Caco-2 (cell line): ENCODE measurements at regions of chr5 and their contacts with region 1.

Region 1: GRCh38 chr5:131263648-131264450 is at the start of gene CDC42SE2:
- DNase-seq: peak; percentile 78 to 90
- H3K4me3 ChIP-seq: peak within 1 kb of the TSS; percentile 100
- H3K4me3 Mint-ChIP-seq: peak within 1 kb of the TSS; percentile 84
- H3K27ac Mint-ChIP-seq: peak within 1 kb of the TSS; percentile 79
- H3K4me1 ChIP-seq: peaks cover 10% of the 10 kb centered on the region; the same call in 1 of the 2 replicates
- H3K4me1 Mint-ChIP-seq: peaks cover 9% of the 10 kb centered on the region
- H3K27me3 ChIP-seq: no peaks in the 10 kb centered on the region
- H3K27me3 Mint-ChIP-seq: no peaks in the 10 kb centered on the region
- CTCF ChIP-seq: no peak
- total RNA-seq, gene CDC42SE2: 39.4 and 41.1 TPM in 2 replicates

Region 2: GRCh38 chr5:131165119-131165727 is 98.6 kb before region 1 on chr5 and contains the start of gene HINT1:
- CTCF ChIA-PET with region 1: no interaction called
- POLR2A ChIA-PET with region 1: no interaction called
- intact Hi-C with region 1: loop called (anchors 1 kb)
- DNase-seq: peak; percentile 94 to 97
- H3K4me3 ChIP-seq: peak within 1 kb of the TSS; percentile 100
- H3K4me3 Mint-ChIP-seq: peak within 1 kb of the TSS; percentile 70
- H3K27ac Mint-ChIP-seq: peak within 1 kb of the TSS; percentile 26
- H3K4me1 ChIP-seq: peaks cover 9% of the 10 kb centered on the region
- H3K4me1 Mint-ChIP-seq: peaks cover 21% of the 10 kb centered on the region
- H3K27me3 ChIP-seq: no peaks in the 10 kb centered on the region
- H3K27me3 Mint-ChIP-seq: no peaks in the 10 kb centered on the region
- CTCF ChIP-seq: peak in 1 of 2 experiments; percentile 39
- total RNA-seq, gene HINT1: 228 and 243 TPM in 2 replicates

Region 3: DNA sequence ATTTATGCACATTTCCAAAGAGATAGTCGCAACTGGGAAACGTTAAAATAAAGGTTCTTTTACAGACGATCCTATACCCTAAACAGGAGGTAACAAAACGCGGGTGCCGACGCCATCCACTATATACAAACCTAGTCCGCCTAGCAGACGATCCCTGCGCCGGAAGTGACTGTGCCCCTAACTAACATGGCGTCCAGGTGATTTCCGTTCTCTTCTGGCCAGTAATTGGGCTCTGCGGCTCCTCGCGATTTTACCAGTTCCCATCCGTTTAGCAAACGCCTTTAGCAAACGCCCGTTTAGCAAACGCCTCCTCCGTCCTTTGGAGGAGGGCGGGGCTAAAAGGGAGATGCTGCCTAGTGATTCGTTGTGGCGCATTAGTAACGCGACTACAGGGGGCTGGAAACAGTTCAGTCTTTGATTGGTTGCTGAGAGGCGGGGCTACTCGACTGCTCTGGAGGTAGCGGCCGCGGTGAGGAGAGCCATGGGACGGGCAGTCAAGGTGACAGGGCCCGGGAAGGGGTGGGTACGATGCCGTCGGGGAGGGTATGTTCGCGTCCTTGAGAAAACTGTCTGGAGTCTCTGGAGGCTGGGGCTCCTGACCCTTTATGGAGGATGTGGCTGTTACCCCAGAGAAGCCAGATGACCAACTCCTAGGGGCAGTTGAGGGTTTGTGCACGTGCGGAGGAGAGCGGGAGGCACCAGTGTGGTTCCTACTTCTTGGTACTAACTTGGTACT is 93.1 kb before region 1 on chr5 and contains the start of gene LYRM7:
- CTCF ChIA-PET with region 1: no interaction called
- POLR2A ChIA-PET with region 1: interaction called, 4 read pairs
- intact Hi-C with region 1: loop called (anchors 1 kb)
- DNase-seq: peak; percentile 97 to 99
- H3K4me3 ChIP-seq: peak within 1 kb of the TSS; percentile 61
- H3K4me3 Mint-ChIP-seq: peak within 1 kb of the TSS; percentile 96
- H3K27ac Mint-ChIP-seq: peak within 1 kb of the TSS; percentile 89
- H3K4me1 ChIP-seq: no peaks in the 10 kb centered on the region; the same call in 1 of the 2 replicates
- H3K4me1 Mint-ChIP-seq: peaks cover 10% of the 10 kb centered on the region
- H3K27me3 ChIP-seq: no peaks in the 10 kb centered on the region
- H3K27me3 Mint-ChIP-seq: no peaks in the 10 kb centered on the region
- CTCF ChIP-seq: no peak
- total RNA-seq, gene LYRM7: 13.7 and 14.9 TPM in 2 replicates

Region 4: GRCh38 chr5:131214609-131215227 is 49.1 kb before region 1 on chr5:
- CTCF ChIA-PET with region 1: no interaction called
- POLR2A ChIA-PET with region 1: no interaction called
- intact Hi-C with region 1: no loop called
- DNase-seq: no peak
- H3K4me3 ChIP-seq: no peak overlapping the region
- H3K4me3 Mint-ChIP-seq: no peak overlapping the region
- H3K27ac Mint-ChIP-seq: no peak overlapping the region
- H3K4me1 ChIP-seq: no peaks in the 10 kb centered on the region
- H3K4me1 Mint-ChIP-seq: no peaks in the 10 kb centered on the region
- H3K27me3 ChIP-seq: no peaks in the 10 kb centered on the region
- H3K27me3 Mint-ChIP-seq: no peaks in the 10 kb centered on the region
- CTCF ChIP-seq: no peak

Region 5: DNA sequence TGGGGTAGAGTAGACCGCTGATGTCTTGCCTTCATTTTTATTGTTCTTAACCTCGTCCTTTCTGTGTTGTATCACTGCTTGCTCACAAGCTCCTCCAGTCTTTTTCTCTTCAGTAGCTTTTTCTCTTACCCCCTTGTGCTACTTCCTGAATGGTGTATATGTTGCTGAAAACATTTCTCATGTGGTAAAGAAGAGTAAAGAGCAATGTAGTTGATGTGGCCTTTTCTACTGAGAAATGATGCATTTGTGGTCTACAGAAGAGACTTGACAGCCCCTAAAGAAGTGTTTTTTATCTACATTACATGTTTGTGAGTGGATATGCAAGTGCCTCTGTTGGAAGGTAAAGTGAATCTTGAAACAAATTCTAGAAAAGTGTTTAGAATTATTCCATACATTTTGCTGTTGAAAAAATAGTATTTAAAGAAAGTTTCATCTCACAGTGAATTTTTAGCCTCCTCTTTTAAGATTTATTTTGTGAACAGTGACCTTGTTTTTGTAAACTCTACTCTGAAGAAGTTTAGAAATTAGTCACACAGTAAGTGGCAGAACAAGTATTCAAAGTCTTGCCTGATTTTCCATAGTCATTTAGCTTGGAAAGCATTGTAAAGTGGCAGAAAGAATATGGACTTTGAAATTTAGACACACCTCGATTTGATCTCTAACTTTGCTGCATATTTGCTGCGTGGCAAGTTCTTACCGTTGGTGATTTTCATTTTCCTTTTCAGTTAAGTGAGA is 17.5 kb after region 1 on chr5:
- CTCF ChIA-PET with region 1: interaction called, 3 read pairs
- POLR2A ChIA-PET with region 1: interaction called, 3 read pairs
- intact Hi-C with region 1: loop called (anchors 2 kb)
- DNase-seq: peak in 1 of 2 experiments; percentile 11
- H3K4me3 ChIP-seq: peak overlapping the region; percentile 25
- H3K4me3 Mint-ChIP-seq: peak overlapping the region; percentile 68
- H3K27ac Mint-ChIP-seq: peak overlapping the region; percentile 72
- H3K4me1 ChIP-seq: peaks cover 22% of the 10 kb centered on the region
- H3K4me1 Mint-ChIP-seq: peaks cover 22% of the 10 kb centered on the region
- H3K27me3 ChIP-seq: no peaks in the 10 kb centered on the region
- H3K27me3 Mint-ChIP-seq: no peaks in the 10 kb centered on the region
- CTCF ChIP-seq: no peak

Region 6: GRCh38 chr5:131316026-131316425 is 52.2 kb after region 1 on chr5:
- CTCF ChIA-PET with region 1: no interaction called
- POLR2A ChIA-PET with region 1: no interaction called
- intact Hi-C with region 1: loop called (anchors 1 kb)
- DNase-seq: no peak
- H3K4me3 ChIP-seq: no peak overlapping the region
- H3K4me3 Mint-ChIP-seq: no peak overlapping the region
- H3K27ac Mint-ChIP-seq: no peak overlapping the region
- H3K4me1 ChIP-seq: peaks cover 15% of the 10 kb centered on the region
- H3K4me1 Mint-ChIP-seq: peaks cover 14% of the 10 kb centered on the region
- H3K27me3 ChIP-seq: no peaks in the 10 kb centered on the region
- H3K27me3 Mint-ChIP-seq: no peaks in the 10 kb centered on the region
- CTCF ChIP-seq: no peak

Region 7: GRCh38 chr5:131394128-131394527 is 130.3 kb after region 1 on chr5:
- CTCF ChIA-PET with region 1: no interaction called
- POLR2A ChIA-PET with region 1: no interaction called
- intact Hi-C with region 1: no loop called
- DNase-seq: no peak
- H3K4me3 ChIP-seq: no peak overlapping the region
- H3K4me3 Mint-ChIP-seq: no peak overlapping the region
- H3K27ac Mint-ChIP-seq: peak overlapping the region; percentile 25
- H3K4me1 ChIP-seq: no peaks in the 10 kb centered on the region
- H3K4me1 Mint-ChIP-seq: no peaks in the 10 kb centered on the region
- H3K27me3 ChIP-seq: no peaks in the 10 kb centered on the region
- H3K27me3 Mint-ChIP-seq: no peaks in the 10 kb centered on the region
- CTCF ChIP-seq: no peak

Region 8: GRCh38 chr5:131466171-131466766 is 202.4 kb after region 1 on chr5:
- CTCF ChIA-PET with region 1: no interaction called
- POLR2A ChIA-PET with region 1: no interaction called
- intact Hi-C with region 1: no loop called
- DNase-seq: no peak
- H3K4me3 ChIP-seq: no peak overlapping the region
- H3K4me3 Mint-ChIP-seq: no peak overlapping the region
- H3K27ac Mint-ChIP-seq: no peak overlapping the region
- H3K4me1 ChIP-seq: no peaks in the 10 kb centered on the region
- H3K4me1 Mint-ChIP-seq: no peaks in the 10 kb centered on the region
- H3K27me3 ChIP-seq: no peaks in the 10 kb centered on the region
- H3K27me3 Mint-ChIP-seq: no peaks in the 10 kb centered on the region
- CTCF ChIP-seq: no peak

Region 9: DNA sequence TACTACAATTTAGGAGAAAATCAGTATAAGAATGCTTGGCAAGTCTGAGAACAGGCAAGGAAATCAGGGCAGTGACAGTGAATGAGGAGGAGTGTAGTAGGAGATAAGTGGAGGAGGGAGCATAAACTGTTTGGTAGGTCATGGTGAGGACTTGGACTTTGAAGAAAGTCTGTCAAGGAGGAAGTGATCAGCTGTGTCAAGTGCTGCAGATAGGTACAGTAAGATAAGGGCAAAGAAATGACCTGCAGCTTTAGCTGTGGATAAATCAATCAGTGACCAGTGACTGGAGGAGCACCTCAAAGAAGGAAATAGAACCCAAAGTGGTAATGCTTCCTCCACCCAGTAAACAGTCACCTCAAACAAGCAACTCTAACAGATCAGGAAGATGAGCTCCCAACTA is 264.8 kb after region 1 on chr5:
- CTCF ChIA-PET with region 1: no interaction called
- POLR2A ChIA-PET with region 1: no interaction called
- intact Hi-C with region 1: no loop called
- DNase-seq: no peak
- H3K4me3 ChIP-seq: no peak overlapping the region
- H3K4me3 Mint-ChIP-seq: no peak overlapping the region
- H3K27ac Mint-ChIP-seq: no peak overlapping the region
- H3K4me1 ChIP-seq: peaks cover 5% of the 10 kb centered on the region; the same call in 1 of the 2 replicates
- H3K4me1 Mint-ChIP-seq: peaks cover 7% of the 10 kb centered on the region
- H3K27me3 ChIP-seq: no peaks in the 10 kb centered on the region
- H3K27me3 Mint-ChIP-seq: no peaks in the 10 kb centered on the region
- CTCF ChIP-seq: no peak